ENCODE measurements at regions of chr22 and their contacts with region 1.

Region 1: GRCh38 chr22:50030297-50031188 is 18.0 kb upstream of the IL17REL start:
- DNase-seq: peak; percentile 67 to 92 (median 75)
- H3K4me3 ChIP-seq: no peak overlapping the region
- H3K27ac ChIP-seq: no peak overlapping the region
- H3K4me1 ChIP-seq: no peaks in the 10 kb centered on the region
- H3K27me3 ChIP-seq: no peaks in the 10 kb centered on the region
- CTCF ChIP-seq: peak; percentile 99

Region 2: GRCh38 chr22:49929208-49930136 is 101.1 kb before region 1 on chr22:
- intact Hi-C with region 1: loop called (anchors 5 kb)
- DNase-seq: peak in 3 of 5 donors; percentile 53 to 83 (median 69)
- H3K4me3 ChIP-seq: no peak overlapping the region
- H3K27ac ChIP-seq: no peak overlapping the region
- H3K4me1 ChIP-seq: peaks cover 0 to 22% (median 0%) of the 10 kb centered on the region in 3 donors
- H3K27me3 ChIP-seq: no peaks in the 10 kb centered on the region
- CTCF ChIP-seq: peak; percentile 85